ENCODE measurements at regions of chr20 and their contacts with region 1.

Region 1: GRCh38 chr20:57450419-57450818 is 59.2 kb downstream of the RBM38 start:
- DNase-seq: no peak
- H3K4me3 ChIP-seq: no peak overlapping the region
- H3K27ac ChIP-seq: no peak overlapping the region
- H3K4me1 ChIP-seq: no peaks in the 10 kb centered on the region
- H3K27me3 ChIP-seq: peaks cover 0 to 4% of the 10 kb centered on the region in 2 donors
- CTCF ChIP-seq: no peak
- POLR2A ChIP-seq: no peak

Region 2: DNA sequence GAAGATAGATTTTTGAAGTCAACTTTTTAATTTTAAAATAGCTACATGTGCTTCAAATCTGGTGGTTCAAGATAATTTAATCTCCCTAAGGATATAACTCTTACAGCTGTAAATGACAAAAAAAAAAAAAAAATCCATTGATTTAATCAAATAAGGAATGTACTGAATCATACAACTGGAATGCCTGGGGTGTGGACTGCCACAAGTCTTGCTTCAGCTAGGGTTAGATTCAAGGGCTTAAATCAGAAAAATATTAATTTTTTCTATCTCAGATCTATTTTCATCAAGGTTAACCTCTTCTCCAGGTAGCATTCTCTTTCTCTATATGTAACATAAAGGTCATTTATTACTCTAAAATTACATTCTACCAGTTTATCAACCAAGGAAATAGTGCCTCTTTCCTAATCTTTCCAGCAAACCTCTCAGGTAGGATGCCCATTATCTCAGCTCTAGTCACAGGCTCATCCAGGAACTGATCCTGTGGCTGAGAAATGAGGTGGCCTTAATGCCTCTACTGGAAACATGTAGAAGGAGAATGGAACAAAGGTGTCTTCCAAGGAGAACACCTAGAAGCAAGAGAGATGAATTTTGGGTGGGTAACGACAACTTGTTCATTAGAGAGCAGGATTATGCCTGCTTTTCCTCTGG is 1912.0 kb before region 1 on chr20:
- intact Hi-C with region 1: loop called (anchors 10 kb)
- DNase-seq: no peak
- H3K4me3 ChIP-seq: no peak overlapping the region
- H3K27ac ChIP-seq: no peak overlapping the region
- H3K4me1 ChIP-seq: no peaks in the 10 kb centered on the region
- H3K27me3 ChIP-seq: no peaks in the 10 kb centered on the region
- CTCF ChIP-seq: no peak
- POLR2A ChIP-seq: no peak